ENCODE measurements at regions of chr2 and their contacts with region 1.

Region 1: DNA sequence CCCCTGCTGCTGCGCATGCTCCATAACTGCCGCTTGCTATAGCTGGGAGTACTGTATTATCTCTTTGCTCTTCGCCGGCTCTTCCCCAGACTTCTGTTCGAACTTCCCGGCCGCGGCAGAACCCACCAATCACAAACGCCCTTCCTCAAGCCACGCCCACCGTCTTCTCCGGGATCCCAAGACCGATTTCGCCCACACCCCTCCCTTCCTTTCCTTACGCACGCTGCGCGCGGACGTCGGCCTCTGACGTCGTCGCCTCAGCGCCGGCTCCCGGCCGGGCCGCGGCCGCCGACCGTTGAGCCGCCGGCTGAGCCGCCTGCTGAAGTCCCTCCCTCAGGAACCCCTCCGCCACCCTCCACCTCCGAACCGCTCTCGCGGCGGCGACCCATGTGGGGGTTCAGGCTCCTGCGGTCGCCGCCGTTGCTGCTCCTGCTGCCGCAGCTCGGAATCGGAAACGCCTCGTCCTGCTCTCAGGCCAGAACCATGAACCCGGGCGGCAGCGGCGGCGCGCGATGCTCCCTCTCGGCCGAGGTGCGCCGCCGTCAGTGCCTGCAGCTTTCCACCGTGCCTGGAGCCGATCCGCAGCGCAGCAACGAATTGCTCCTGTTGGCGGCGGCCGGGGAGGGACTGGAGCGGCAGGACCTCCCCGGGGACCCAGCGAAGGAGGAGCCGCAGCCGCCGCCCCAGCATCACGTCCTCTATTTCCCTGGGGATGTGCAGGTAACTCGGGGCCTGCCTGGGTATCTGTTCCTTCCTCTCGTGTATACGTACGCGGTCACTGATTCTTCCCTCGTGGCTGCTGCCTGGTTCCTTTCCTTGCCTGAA is at the start of gene C2orf69:
- DNase-seq: peak; percentile 80 to 96 (median 91)
- ATAC-seq: peak; percentile 78
- H3K4me3 ChIP-seq: peak within 1 kb of the TSS; percentile 82 to 83
- H3K4me3 Mint-ChIP-seq: peak within 1 kb of the TSS; percentile 99
- H3K27ac ChIP-seq: peak within 1 kb of the TSS; percentile 84 to 93
- H3K27ac Mint-ChIP-seq: peak within 1 kb of the TSS; percentile 95
- H3K4me1 ChIP-seq: peaks cover 28% of the 10 kb centered on the region
- H3K4me1 Mint-ChIP-seq: peaks cover 38% of the 10 kb centered on the region
- H3K27me3 ChIP-seq: no peaks in the 10 kb centered on the region
- H3K27me3 Mint-ChIP-seq: peaks cover 6% of the 10 kb centered on the region
- CTCF ChIP-seq: no peak
- total RNA-seq, gene C2orf69: 16.3 to 17.5 TPM

Region 2: DNA sequence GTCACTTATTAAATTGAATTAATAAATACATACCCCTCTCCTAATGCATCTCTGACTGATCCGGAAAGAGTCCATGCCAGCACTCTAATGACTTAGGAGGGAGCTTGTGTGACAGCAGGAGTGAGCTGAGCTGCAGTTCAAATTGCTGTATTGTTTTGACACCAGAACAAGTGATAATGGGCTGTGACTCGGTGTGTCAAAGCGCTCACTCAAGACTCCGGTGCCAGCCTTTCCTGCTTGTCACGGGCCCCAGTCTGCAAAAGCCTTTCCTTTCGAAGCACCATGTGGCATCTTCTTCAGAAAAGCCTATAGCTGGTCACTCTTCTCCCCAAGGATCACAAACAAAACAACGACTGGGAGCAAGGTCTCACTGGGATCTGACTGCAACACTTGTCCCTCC is 496.8 kb before region 1 on chr2:
- CTCF ChIA-PET with region 1: no interaction called
- POLR2A ChIA-PET with region 1: no interaction called
- intact Hi-C with region 1: no loop called
- DNase-seq: no peak
- ATAC-seq: no peak
- H3K4me3 ChIP-seq: no peak overlapping the region
- H3K4me3 Mint-ChIP-seq: no peak overlapping the region
- H3K27ac ChIP-seq: no peak overlapping the region
- H3K27ac Mint-ChIP-seq: no peak overlapping the region
- H3K4me1 ChIP-seq: no peaks in the 10 kb centered on the region
- H3K4me1 Mint-ChIP-seq: no peaks in the 10 kb centered on the region
- H3K27me3 ChIP-seq: no peaks in the 10 kb centered on the region
- H3K27me3 Mint-ChIP-seq: peaks cover 16% of the 10 kb centered on the region
- CTCF ChIP-seq: no peak

Region 3: GRCh38 chr2:199850718-199851500 is 60.4 kb before region 1 on chr2 and contains the start of gene FTCDNL1:
- CTCF ChIA-PET with region 1: no interaction called
- POLR2A ChIA-PET with region 1: no interaction called
- intact Hi-C with region 1: loop called (anchors 1 kb)
- DNase-seq: peak; percentile 27 to 77 (median 53)
- ATAC-seq: peak; percentile 95
- H3K4me3 ChIP-seq: peak within 1 kb of the TSS; percentile 59 to 82
- H3K4me3 Mint-ChIP-seq: peak within 1 kb of the TSS; percentile 99
- H3K27ac ChIP-seq: peak within 1 kb of the TSS in 1 of 2 experiments; percentile 35
- H3K27ac Mint-ChIP-seq: peak within 1 kb of the TSS; percentile 82
- H3K4me1 ChIP-seq: no peaks in the 10 kb centered on the region
- H3K4me1 Mint-ChIP-seq: peaks cover 10% of the 10 kb centered on the region
- H3K27me3 ChIP-seq: no peaks in the 10 kb centered on the region
- H3K27me3 Mint-ChIP-seq: peaks cover 4% of the 10 kb centered on the region
- CTCF ChIP-seq: peak; percentile 48
- total RNA-seq, gene FTCDNL1: 0.60 to 0.78 TPM

Region 4: DNA sequence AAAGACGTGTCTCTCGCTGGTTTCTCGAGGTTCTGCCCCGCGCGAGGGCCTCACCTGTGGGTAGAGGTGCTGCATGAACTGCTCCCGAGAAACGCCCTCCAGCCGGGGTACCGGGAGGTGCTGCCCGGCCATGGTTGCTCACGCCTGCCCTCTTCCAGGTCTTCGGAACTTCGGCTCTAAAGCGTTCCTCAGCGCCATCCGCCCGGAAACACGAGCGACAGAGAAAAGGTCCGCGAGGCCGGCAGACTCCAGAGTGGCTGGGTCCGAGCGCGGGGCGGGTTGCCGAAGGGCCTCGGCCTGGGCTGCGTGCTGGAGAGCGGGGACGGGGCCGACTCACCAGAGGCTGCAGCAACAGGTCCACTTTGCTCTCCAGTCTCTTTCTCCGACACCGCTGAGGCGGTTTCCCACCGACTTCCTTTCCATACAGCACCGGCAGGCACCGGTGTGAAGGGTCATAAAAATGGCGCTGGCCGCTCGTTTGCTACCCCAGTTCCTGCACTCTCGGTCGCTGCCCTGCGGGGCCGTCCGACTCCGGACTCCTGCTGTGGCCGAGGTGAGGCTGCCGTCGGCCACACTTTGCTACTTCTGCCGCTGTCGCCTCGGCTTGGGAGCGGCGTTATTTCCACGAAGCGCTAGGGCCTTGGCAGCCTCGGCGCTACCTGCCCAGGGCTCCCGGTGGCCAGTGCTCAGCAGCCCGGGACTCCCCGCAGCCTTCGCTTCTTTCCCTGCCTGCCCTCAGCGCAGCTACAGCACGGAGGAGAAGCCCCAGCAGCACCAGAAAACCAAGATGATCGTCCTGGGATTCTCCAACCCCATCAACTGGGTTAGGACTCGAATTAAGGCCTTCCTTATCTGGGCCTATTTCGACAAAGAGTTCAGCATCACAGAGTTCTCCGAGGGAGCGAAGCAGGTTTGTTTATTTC is 44.3 kb after region 1 on chr2 and contains the starts of genes MAIP1 and TYW5:
- CTCF ChIA-PET with region 1: no interaction called
- POLR2A ChIA-PET with region 1: no interaction called
- intact Hi-C with region 1: loop called (anchors 1 to 2 kb)
- DNase-seq: peak; percentile 60 to 88 (median 78)
- ATAC-seq: peak; percentile 87
- H3K4me3 ChIP-seq: peak within 1 kb of the TSS; percentile 97 to 98
- H3K4me3 Mint-ChIP-seq: peak within 1 kb of the TSS; percentile 97
- H3K27ac ChIP-seq: peak within 1 kb of the TSS; percentile 71 to 87
- H3K27ac Mint-ChIP-seq: peak within 1 kb of the TSS; percentile 91
- H3K4me1 ChIP-seq: peaks cover 34% of the 10 kb centered on the region
- H3K4me1 Mint-ChIP-seq: peaks cover 60% of the 10 kb centered on the region
- H3K27me3 ChIP-seq: no peaks in the 10 kb centered on the region
- H3K27me3 Mint-ChIP-seq: no peaks in the 10 kb centered on the region
- CTCF ChIP-seq: no peak
- total RNA-seq, gene MAIP1: 40.1 to 48.3 TPM
- total RNA-seq, gene TYW5: 20.5 to 22.2 TPM

Region 5: GRCh38 chr2:200086911-200087310 is 175.6 kb after region 1 on chr2:
- CTCF ChIA-PET with region 1: no interaction called
- POLR2A ChIA-PET with region 1: no interaction called
- intact Hi-C with region 1: no loop called
- DNase-seq: no peak
- ATAC-seq: no peak
- H3K4me3 ChIP-seq: no peak overlapping the region
- H3K4me3 Mint-ChIP-seq: no peak overlapping the region
- H3K27ac ChIP-seq: no peak overlapping the region
- H3K27ac Mint-ChIP-seq: no peak overlapping the region
- H3K4me1 ChIP-seq: no peaks in the 10 kb centered on the region
- H3K4me1 Mint-ChIP-seq: no peaks in the 10 kb centered on the region
- H3K27me3 ChIP-seq: peaks cover 0 to 2% of the 10 kb centered on the region in 2 experiments
- H3K27me3 Mint-ChIP-seq: peaks cover 6% of the 10 kb centered on the region
- CTCF ChIP-seq: no peak

Region 6: DNA sequence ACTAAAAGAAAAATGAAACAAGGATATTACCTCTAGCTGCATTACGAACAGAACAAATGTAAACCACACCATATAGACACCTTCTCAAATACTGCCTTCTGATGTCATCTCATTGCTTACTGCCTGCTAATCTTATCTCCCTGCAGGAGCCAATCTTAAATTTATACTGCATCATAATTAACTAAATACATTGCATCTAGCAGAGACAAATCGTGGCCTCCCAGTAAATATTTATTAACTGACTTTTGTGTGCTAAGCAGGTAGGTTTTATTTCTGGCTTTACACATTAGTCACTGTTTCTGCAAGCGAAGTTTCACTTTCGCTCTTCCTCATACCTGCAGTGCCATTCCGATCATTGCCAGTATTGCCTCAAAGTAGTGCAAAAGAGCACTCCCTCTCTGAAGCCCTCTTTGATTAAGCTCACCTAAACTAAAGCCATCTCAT is 462.7 kb after region 1 on chr2:
- CTCF ChIA-PET with region 1: no interaction called
- POLR2A ChIA-PET with region 1: no interaction called
- intact Hi-C with region 1: loop called in 1 of 2 experiments (anchors 5 kb)
- DNase-seq: peak in 7 of 9 experiments; percentile 4 to 79 (median 25)
- ATAC-seq: peak; percentile 92
- H3K4me3 ChIP-seq: peak overlapping the region; percentile 51 to 69
- H3K4me3 Mint-ChIP-seq: peak overlapping the region; percentile 87
- H3K27ac ChIP-seq: peak overlapping the region; percentile 40 to 52
- H3K27ac Mint-ChIP-seq: peak overlapping the region; percentile 90
- H3K4me1 ChIP-seq: peaks cover 23% of the 10 kb centered on the region
- H3K4me1 Mint-ChIP-seq: peaks cover 44% of the 10 kb centered on the region
- H3K27me3 ChIP-seq: no peaks in the 10 kb centered on the region
- H3K27me3 Mint-ChIP-seq: no peaks in the 10 kb centered on the region
- CTCF ChIP-seq: no peak

Measured in CD8-positive, alpha-beta T cell (primary cell).